Activated CD4-positive, alpha-beta T cell treated with anti-CD3 and anti-CD28 coated beads for 36 hours (primary cell): ENCODE measurements at regions of chr3 and their contacts with region 1.

Region 1: GRCh38 chr3:152365766-152366593 is 97.3 kb downstream of the MBNL1 start:
- DNase-seq: no peak
- ATAC-seq: no peak
- H3K4me3 Mint-ChIP-seq: no peak overlapping the region
- H3K27ac Mint-ChIP-seq: peak overlapping the region; percentile 20
- H3K4me1 Mint-ChIP-seq: peaks cover 76% of the 10 kb centered on the region
- H3K27me3 Mint-ChIP-seq: no peaks in the 10 kb centered on the region

Region 2: DNA sequence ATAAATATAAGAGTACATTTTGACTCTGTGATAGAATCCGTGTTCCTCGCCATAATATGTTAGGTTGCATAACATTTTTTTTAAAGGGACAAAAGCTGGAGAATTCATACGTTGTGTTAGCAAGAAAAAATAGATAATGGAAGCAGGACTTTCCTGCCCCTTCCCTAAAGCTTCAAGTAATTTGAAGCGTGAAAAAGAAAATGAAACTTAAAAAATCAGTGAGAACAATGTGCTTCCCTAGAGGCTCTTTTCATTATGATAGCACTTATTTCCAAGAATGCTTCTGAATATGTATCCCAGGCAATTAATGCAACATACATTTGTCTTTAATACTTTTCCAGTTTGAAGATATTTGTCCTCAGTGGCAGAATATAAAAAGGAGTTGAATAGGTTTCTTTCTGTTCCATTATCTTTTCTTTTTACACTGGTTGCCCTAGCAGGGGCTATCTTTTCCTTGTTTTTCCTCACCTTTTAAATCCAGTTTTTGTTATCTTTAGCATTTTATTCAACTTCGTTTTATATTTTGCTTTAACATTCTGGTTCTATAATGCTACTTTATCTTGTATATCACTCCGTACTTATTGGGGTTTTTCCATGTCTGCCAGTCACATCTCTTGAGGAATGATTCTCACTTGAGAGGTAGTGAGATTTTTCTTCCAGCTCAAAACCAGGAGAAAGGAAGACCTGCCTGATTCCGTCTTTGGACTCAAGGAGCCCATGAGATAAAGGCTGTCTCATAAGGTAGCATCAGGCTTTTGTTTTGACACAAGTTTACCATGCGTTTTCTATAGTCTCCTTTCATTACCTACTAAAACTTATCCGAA is 16.5 kb after region 1 on chr3:
- CTCF ChIA-PET with region 1: interaction called, 5 read pairs
- POLR2A ChIA-PET with region 1: no interaction called
- intact Hi-C with region 1: loop called in 1 of 2 experiments (anchors 2 kb)
- DNase-seq: no peak
- ATAC-seq: peak; percentile 8
- H3K4me3 Mint-ChIP-seq: peak overlapping the region; percentile 66
- H3K27ac Mint-ChIP-seq: peak overlapping the region; percentile 92
- H3K4me1 Mint-ChIP-seq: peaks cover 77% of the 10 kb centered on the region
- H3K27me3 Mint-ChIP-seq: no peaks in the 10 kb centered on the region